ENCODE measurements at regions of chr5 and their contacts with region 1.

Region 1: DNA sequence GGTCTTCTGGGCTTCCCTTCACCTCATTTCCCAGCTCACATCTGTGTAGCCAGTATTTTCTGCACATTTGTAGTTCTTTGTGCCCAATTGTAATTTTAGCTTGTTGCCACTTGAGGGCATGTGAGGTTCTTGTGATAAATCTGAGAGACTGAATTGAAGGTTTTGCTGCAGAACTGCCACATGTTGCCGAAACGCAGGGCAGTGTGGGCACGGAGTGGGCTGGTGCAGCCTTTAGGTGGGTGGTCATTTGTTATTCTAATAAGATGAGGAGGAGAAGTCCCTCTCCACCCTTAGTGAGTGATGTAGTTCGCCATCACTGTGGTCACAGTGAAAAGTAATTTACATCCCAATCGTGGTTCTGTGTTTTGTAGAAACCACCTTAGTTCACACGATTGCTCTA is 21.2 kb downstream of the OTULIN start:
- DNase-seq: peak in 6 of 9 experiments; percentile 31 to 76 (median 56)
- ATAC-seq: peak; percentile 87
- H3K4me3 ChIP-seq: no peak overlapping the region
- H3K4me3 Mint-ChIP-seq: peak overlapping the region; percentile 53
- H3K27ac ChIP-seq: no peak overlapping the region
- H3K27ac Mint-ChIP-seq: peak overlapping the region; percentile 69
- H3K4me1 ChIP-seq: peaks cover 3% of the 10 kb centered on the region
- H3K4me1 Mint-ChIP-seq: peaks cover 13% of the 10 kb centered on the region
- H3K27me3 ChIP-seq: no peaks in the 10 kb centered on the region
- H3K27me3 Mint-ChIP-seq: no peaks in the 10 kb centered on the region
- CTCF ChIP-seq: peak; percentile 75

Region 2: DNA sequence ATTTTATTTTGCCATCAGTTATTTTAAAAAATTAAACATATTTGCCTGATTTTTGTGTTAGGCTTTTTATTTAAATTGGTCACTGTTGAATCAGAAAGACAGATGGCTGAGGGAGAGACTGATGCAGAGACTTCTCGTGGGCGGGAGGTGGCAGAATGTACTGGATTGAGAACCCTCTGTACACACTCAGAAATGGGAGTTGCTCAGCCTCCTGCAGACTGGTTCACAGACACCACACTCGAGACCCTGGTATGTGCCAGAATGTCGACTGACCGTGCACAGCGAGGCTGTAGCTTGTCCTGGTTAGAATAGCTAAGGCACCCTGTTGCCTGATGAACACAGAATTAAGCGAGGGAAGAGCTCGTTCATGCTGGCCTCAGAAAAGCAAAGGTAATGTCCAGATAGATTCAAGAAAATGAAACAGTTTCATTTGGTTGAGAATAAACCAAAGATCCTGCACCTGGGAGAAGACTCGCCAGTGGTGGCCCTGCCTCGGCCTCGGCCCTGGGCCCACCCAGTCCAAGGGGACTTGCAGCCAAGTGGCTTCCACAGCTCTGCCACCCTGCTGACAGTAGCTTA is 175.5 kb before region 1 on chr5:
- CTCF ChIA-PET with region 1: no interaction called
- POLR2A ChIA-PET with region 1: no interaction called
- intact Hi-C with region 1: no loop called
- DNase-seq: no peak
- ATAC-seq: no peak
- H3K4me3 ChIP-seq: no peak overlapping the region
- H3K4me3 Mint-ChIP-seq: no peak overlapping the region
- H3K27ac ChIP-seq: no peak overlapping the region
- H3K27ac Mint-ChIP-seq: no peak overlapping the region
- H3K4me1 ChIP-seq: no peaks in the 10 kb centered on the region
- H3K4me1 Mint-ChIP-seq: no peaks in the 10 kb centered on the region
- H3K27me3 ChIP-seq: no peaks in the 10 kb centered on the region
- H3K27me3 Mint-ChIP-seq: no peaks in the 10 kb centered on the region
- CTCF ChIP-seq: no peak

Region 3: DNA sequence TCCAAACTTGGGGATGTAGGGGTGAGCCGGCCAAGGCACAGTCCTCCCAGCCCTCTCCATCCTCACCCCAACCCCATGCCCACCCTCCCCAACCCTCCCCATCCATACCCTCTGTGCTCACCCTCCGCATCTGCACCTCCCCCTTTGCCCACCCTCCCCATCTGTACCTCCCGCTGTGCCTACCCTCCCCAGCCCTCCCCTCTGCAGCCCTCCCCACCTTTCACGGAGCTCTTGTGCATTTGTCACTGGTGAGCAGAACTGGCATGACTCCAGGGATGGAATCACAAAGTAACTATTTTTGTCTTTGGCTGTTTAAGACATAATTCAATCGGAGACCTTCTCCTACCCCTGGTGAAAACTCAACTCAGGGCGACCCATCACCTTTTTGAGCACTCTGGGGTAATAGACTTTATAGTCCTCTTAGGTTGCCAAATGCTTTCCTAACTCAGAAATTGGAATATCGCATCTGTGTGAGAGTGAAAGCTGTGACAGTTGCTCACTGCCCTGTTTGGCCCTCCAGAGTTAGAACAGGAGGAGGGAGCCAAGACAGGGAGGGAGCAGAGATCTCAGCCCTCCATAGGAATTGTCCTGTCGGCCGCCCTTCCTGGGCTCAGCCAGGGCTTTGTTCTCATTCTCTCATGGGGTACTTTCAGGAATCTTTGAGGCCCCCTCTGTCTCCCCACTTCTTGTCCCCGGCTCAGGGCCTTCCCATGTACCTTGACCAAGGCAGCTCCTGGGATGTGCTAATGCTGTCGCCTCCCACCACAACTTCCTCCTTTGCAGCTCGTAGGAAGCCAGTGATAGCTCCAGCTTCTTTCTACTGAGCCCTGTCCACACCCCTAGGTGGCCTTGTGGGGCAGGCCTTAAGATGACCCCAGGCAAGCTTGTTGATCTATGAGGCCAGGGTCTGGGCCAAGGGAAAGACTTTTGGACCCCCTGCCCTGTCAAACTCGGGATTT is 15.0 kb after region 1 on chr5:
- CTCF ChIA-PET with region 1: interaction called, 30 read pairs
- POLR2A ChIA-PET with region 1: interaction called, 4 read pairs
- intact Hi-C with region 1: no loop called
- DNase-seq: no peak
- ATAC-seq: no peak
- H3K4me3 ChIP-seq: no peak overlapping the region
- H3K4me3 Mint-ChIP-seq: no peak overlapping the region
- H3K27ac ChIP-seq: peak overlapping the region in 1 of 2 experiments; percentile 21
- H3K27ac Mint-ChIP-seq: peak overlapping the region; percentile 94
- H3K4me1 ChIP-seq: peaks cover 53% of the 10 kb centered on the region
- H3K4me1 Mint-ChIP-seq: peaks cover 71% of the 10 kb centered on the region
- H3K27me3 ChIP-seq: no peaks in the 10 kb centered on the region
- H3K27me3 Mint-ChIP-seq: no peaks in the 10 kb centered on the region
- CTCF ChIP-seq: no peak

Region 4: DNA sequence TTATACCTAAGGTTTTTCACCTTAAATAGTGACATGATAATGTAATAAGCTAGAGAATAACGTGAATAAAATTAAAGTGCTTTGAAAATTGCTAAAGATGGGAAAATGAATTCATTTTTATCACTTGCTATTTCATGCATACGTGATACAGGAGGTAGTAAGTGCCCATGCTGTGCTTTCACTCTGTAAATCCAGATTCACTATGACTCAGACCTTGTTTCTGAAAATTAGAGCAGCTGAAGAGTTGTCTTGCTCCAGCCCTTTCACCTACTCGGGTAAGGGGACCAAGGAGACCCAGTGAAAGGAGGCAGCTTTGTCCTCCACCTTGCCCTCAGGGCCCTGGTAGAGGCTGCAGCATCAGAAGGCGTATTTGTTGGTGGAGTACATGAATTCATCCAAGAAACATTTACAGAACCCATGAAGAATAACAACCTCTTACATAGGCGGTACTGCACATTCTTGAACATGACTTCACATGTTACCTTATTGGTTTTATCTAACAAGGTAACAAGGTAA is 98.0 kb after region 1 on chr5:
- CTCF ChIA-PET with region 1: no interaction called
- POLR2A ChIA-PET with region 1: no interaction called
- intact Hi-C with region 1: no loop called
- DNase-seq: no peak
- ATAC-seq: no peak
- H3K4me3 ChIP-seq: no peak overlapping the region
- H3K4me3 Mint-ChIP-seq: no peak overlapping the region
- H3K27ac ChIP-seq: no peak overlapping the region
- H3K27ac Mint-ChIP-seq: peak overlapping the region; percentile 47
- H3K4me1 ChIP-seq: no peaks in the 10 kb centered on the region
- H3K4me1 Mint-ChIP-seq: peaks cover 43% of the 10 kb centered on the region
- H3K27me3 ChIP-seq: no peaks in the 10 kb centered on the region
- H3K27me3 Mint-ChIP-seq: no peaks in the 10 kb centered on the region
- CTCF ChIP-seq: no peak

Region 5: GRCh38 chr5:14809369-14810155 is 123.8 kb after region 1 on chr5:
- CTCF ChIA-PET with region 1: interaction called, 3 read pairs
- POLR2A ChIA-PET with region 1: no interaction called
- intact Hi-C with region 1: loop called in 1 of 2 experiments (anchors 5 kb)
- DNase-seq: peak; percentile 10 to 87 (median 77)
- ATAC-seq: peak; percentile 91
- H3K4me3 ChIP-seq: peak overlapping the region; percentile 16 to 18
- H3K4me3 Mint-ChIP-seq: peak overlapping the region; percentile 80
- H3K27ac ChIP-seq: peak overlapping the region in 1 of 2 experiments; percentile 53
- H3K27ac Mint-ChIP-seq: peak overlapping the region; percentile 91
- H3K4me1 ChIP-seq: peaks cover 42% of the 10 kb centered on the region
- H3K4me1 Mint-ChIP-seq: peaks cover 53% of the 10 kb centered on the region
- H3K27me3 ChIP-seq: no peaks in the 10 kb centered on the region
- H3K27me3 Mint-ChIP-seq: no peaks in the 10 kb centered on the region
- CTCF ChIP-seq: no peak

Region 6: DNA sequence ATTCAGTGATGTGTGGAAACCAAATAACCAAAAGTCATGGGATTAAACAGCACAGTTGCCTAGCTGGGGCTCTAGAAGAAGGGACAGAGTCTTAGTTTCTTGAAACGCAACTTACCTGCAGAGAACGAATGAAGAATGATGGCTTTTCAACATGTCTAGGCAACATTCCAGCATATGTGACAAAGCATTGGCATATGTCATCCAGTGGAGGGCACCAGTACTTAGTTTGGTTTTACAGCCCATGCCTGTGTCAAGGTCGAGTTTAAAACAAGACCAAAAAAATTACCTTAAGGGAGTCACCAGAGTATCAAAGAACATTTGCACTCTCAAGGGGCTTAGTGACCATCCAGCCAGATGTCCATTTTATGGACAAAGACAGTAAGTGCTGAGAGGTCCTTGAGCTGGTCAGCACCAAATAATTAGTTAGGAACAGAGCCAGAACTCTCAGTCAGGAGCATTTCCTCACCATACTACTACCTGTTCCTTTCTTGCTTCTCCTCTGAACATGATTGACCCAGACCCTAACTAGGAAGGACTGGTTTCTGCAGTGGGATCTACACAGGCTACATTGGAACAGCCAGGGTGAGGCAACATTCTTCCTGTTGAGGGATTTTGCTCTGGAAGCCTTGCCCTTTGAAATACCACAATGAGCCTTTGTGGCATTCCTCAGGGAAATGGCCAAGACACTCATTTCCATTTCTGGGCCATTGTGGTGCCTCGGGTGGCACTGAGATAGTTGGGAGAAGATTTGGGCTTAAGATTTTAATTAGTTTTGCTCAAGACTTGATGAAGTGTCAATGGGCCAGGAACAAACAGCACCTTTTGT is 261.3 kb after region 1 on chr5:
- CTCF ChIA-PET with region 1: interaction called, 5 read pairs
- POLR2A ChIA-PET with region 1: no interaction called
- intact Hi-C with region 1: loop called in 1 of 2 experiments (anchors 1 kb)
- DNase-seq: peak in 7 of 9 experiments; percentile 15 to 76 (median 38)
- ATAC-seq: peak; percentile 97
- H3K4me3 ChIP-seq: no peak overlapping the region
- H3K4me3 Mint-ChIP-seq: no peak overlapping the region
- H3K27ac ChIP-seq: no peak overlapping the region
- H3K27ac Mint-ChIP-seq: no peak overlapping the region
- H3K4me1 ChIP-seq: no peaks in the 10 kb centered on the region
- H3K4me1 Mint-ChIP-seq: peaks cover 4% of the 10 kb centered on the region
- H3K27me3 ChIP-seq: no peaks in the 10 kb centered on the region
- H3K27me3 Mint-ChIP-seq: peaks cover 14% of the 10 kb centered on the region
- CTCF ChIP-seq: peak; percentile 68

Region 7: DNA sequence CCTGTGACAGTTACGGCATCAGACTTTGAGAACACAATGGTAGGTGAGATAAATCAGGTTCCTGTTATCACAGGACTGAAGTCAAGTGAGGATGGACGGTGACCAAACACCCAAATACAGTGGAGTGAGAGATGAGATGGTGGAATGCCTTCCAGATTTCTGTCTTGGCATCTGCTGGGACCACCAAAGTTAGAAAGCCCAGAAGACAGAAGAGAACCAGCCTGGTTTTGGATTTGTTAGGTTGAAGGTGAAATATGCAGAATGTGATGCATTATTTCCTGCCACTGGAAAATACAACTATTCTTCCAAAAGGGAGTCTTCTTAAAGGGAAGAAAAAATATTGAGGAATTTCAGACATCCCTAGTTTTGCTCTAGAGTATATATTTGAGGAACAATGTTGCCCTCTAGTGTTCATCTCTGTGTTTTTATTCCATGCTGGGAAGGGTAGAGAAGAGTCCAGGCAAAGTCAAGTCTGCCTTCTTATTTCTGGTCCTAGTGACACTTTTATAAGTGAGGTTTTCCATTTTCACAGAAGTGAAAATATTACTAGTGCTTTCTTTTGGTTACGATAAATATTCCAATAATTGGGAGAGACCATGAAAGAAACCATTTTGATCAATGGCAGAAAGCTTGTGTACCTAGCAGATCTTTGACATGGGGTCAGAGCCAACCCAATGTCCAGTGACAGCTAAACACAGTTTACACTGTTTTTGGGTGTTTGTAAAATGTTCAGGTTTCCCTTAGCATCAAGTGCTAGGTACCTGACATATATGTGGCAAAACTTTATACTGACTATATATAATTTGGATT is 328.1 kb after region 1 on chr5:
- CTCF ChIA-PET with region 1: interaction called, 5 read pairs
- POLR2A ChIA-PET with region 1: no interaction called
- intact Hi-C with region 1: loop called (anchors 1 to 2 kb)
- DNase-seq: peak in 2 of 9 experiments; percentile 44 to 59
- ATAC-seq: peak; percentile 44
- H3K4me3 ChIP-seq: no peak overlapping the region
- H3K4me3 Mint-ChIP-seq: no peak overlapping the region
- H3K27ac ChIP-seq: no peak overlapping the region
- H3K27ac Mint-ChIP-seq: no peak overlapping the region
- H3K4me1 ChIP-seq: no peaks in the 10 kb centered on the region
- H3K4me1 Mint-ChIP-seq: no peaks in the 10 kb centered on the region
- H3K27me3 ChIP-seq: no peaks in the 10 kb centered on the region
- H3K27me3 Mint-ChIP-seq: peaks cover 3% of the 10 kb centered on the region
- CTCF ChIP-seq: peak; percentile 74

Region 8: DNA sequence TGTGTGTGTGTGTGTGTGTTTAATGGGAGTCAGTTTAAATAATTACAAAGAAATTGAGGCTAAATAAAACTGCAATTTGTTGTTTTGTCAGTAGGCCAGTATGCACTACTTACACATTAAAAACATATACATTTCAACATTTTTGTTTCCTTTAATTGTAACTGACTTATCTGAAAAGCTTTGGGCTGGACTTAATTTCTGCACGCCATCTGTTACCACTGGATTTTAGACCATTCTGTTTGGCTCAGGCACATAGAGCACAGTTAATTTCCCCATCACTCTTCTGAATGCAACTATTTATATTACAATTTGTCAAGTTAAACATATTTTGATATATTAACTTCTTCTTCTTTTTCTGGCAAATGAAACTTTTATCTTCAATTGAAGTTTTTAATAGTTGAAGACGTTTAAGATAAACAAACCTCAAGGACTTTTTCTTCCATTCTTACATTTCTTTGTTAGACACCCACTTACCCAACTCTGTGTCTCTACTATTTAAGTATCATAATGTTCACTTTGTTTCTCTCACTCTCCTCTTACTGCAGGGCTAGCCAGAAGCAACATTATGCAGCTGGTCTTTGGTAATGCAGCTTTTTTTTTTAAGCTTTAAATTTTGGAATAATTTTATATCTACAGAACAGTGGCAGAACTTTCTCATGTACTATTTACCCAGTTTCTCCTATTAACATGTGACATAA is 439.3 kb after region 1 on chr5:
- CTCF ChIA-PET with region 1: no interaction called
- POLR2A ChIA-PET with region 1: no interaction called
- intact Hi-C with region 1: no loop called
- DNase-seq: no peak
- ATAC-seq: no peak
- H3K4me3 ChIP-seq: no peak overlapping the region
- H3K4me3 Mint-ChIP-seq: no peak overlapping the region
- H3K27ac ChIP-seq: no peak overlapping the region
- H3K27ac Mint-ChIP-seq: no peak overlapping the region
- H3K4me1 ChIP-seq: no peaks in the 10 kb centered on the region
- H3K4me1 Mint-ChIP-seq: no peaks in the 10 kb centered on the region
- H3K27me3 ChIP-seq: no peaks in the 10 kb centered on the region
- H3K27me3 Mint-ChIP-seq: no peaks in the 10 kb centered on the region
- CTCF ChIP-seq: no peak

Region 9: GRCh38 chr5:15142458-15142857 is 456.7 kb after region 1 on chr5:
- CTCF ChIA-PET with region 1: no interaction called
- POLR2A ChIA-PET with region 1: no interaction called
- intact Hi-C with region 1: no loop called
- DNase-seq: no peak
- ATAC-seq: no peak
- H3K4me3 ChIP-seq: no peak overlapping the region
- H3K4me3 Mint-ChIP-seq: no peak overlapping the region
- H3K27ac ChIP-seq: no peak overlapping the region
- H3K27ac Mint-ChIP-seq: no peak overlapping the region
- H3K4me1 ChIP-seq: no peaks in the 10 kb centered on the region
- H3K4me1 Mint-ChIP-seq: no peaks in the 10 kb centered on the region
- H3K27me3 ChIP-seq: peaks cover 0 to 2% of the 10 kb centered on the region in 2 experiments
- H3K27me3 Mint-ChIP-seq: no peaks in the 10 kb centered on the region
- CTCF ChIP-seq: no peak

Measured in CD8-positive, alpha-beta T cell (primary cell).